GM23248 (cell line): ENCODE measurements at regions of chr19 and their contacts with region 1.

Region 1: DNA sequence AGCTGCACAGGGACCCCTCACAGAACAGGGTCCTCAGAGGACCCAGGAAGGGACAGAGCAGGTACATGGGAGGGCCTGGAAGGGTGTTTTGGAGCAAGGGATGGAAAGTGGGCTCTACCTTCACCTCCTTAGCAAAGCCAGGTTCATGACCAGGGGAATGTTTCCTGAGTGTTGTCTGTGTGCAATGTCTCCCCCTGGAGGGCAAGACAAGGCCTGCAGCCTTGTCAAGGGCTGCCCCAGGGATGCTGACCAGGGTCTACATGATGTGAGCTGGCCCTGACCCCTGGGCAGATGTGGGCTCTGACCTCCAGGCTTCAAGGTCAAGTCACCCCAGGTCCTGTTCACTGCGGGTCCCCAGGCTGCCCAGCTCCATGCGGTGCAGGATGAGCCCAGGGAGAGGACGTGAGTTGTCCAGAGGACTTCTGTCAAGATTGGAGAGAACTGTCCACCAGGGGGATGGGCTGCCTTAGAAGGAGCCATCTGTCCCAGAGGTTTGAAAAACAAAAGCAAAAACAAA is 1.0 kb upstream of the CEACAM1 start:
- DNase-seq: peak; percentile 54
- H3K4me3 ChIP-seq: no peak overlapping the region
- H3K27ac ChIP-seq: no peak overlapping the region
- H3K4me1 ChIP-seq: no peaks in the 10 kb centered on the region
- H3K27me3 ChIP-seq: peaks cover 13% of the 10 kb centered on the region; the same call in 1 of the 2 replicates

Region 2: DNA sequence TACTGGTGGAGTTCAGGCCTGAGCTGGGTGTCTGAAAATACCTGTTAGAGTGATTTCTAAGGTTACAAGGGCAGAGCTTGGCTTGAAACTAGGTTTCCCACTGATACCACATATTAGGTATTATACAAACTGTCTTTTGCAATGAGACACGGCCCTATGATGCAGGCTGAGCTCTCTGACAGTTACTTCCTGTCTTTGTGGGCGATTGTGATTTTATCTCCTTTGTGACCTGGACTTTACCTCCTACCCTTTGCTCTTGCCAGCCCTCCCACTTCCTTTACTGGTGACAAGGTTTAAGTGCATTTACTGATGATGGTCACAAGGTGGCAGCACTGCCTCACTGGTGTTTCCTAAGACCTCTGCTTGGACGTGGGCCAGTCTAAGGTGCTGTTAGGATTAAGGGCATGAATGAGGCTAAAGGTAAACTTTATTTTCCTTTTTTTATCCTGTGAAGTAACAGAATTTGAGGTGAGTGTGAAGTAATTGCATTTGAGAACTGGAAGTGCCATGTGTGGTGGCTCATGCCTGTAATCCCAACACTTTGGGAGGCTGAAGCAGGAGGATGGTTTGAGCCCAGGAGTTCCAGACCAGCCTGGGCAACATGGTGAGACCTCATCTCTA is 78.9 kb before region 1 on chr19:
- in situ Hi-C with region 1: loop called (anchors 10 kb)
- DNase-seq: peak; percentile 81
- H3K4me3 ChIP-seq: no peak overlapping the region
- H3K27ac ChIP-seq: no peak overlapping the region
- H3K4me1 ChIP-seq: peaks cover 12% of the 10 kb centered on the region
- H3K27me3 ChIP-seq: peaks cover 28% of the 10 kb centered on the region